ENCODE measurements at regions of chr2 and their contacts with region 1.

Region 1: GRCh38 chr2:201363857-201364560 is 6.9 kb upstream of the FLACC1 start:
- DNase-seq: peak; percentile 71
- ATAC-seq: peak; percentile 97
- H3K4me3 ChIP-seq: no peak overlapping the region
- H3K27ac ChIP-seq: no peak overlapping the region
- H3K4me1 ChIP-seq: peaks cover 2% of the 10 kb centered on the region; the same call in 1 of the 2 replicates
- H3K27me3 ChIP-seq: no peaks in the 10 kb centered on the region
- CTCF ChIP-seq: peak; percentile 86
- POLR2A ChIP-seq: no peak
- RAD21 ChIP-seq: peak; percentile 81

Region 2: GRCh38 chr2:201248288-201248844 is 115.6 kb before region 1 on chr2:
- CTCF ChIA-PET with region 1: interaction called, 3 read pairs
- POLR2A ChIA-PET with region 1: no interaction called
- dilution Hi-C with region 1: no loop called
- in situ Hi-C with region 1: loop called (anchors 5 kb)
- intact Hi-C with region 1: no loop called
- DNase-seq: no peak
- ATAC-seq: no peak
- H3K4me3 ChIP-seq: no peak overlapping the region
- H3K27ac ChIP-seq: no peak overlapping the region
- H3K4me1 ChIP-seq: peaks cover 2% of the 10 kb centered on the region; the same call in 1 of the 2 replicates
- H3K27me3 ChIP-seq: no peaks in the 10 kb centered on the region
- CTCF ChIP-seq: no peak
- POLR2A ChIP-seq: no peak
- RAD21 ChIP-seq: no peak

Region 3: DNA sequence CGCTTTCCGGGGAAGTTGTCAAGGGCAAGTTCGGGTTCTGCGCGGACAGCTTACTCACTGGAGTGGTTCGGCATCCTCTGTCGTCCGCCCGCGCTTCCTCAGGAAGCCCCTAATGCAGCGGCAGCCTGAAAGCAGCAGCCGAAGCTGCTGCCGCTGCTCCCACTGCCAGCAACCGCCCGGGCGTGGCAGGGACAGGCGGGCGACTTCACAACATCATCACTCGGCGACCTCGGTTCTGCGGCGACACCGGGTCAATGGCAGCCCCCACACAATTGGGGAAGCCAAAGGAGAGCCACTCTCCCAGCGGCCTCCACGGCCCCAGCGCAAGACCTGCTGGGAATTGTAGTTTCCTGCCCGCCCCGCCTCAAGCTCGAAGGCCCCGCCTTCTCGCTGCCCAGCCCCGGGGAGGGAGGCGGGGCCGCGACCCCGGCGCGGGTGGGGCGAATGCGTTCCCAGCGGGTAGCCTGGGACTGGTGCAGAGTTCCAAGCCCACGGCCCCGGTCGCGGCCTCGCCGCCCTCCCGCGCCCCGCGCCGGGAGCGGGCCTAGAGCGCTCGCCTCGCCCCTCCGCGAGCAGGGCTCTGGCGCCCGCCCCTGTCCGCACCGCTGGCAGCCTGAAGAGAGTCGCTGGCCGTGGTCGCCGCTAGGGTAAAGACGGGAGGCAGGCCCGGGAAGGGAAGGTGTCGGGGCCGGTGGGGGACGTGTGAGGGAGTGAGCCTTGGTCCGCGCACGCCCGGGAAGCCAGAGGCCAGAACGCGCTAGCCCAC is 87.5 kb after region 1 on chr2 and contains the starts of genes STRADB and TRAK2:
- CTCF ChIA-PET with region 1: no interaction called
- POLR2A ChIA-PET with region 1: no interaction called
- dilution Hi-C with region 1: no loop called
- in situ Hi-C with region 1: no loop called
- intact Hi-C with region 1: no loop called
- DNase-seq: peak; percentile 92
- ATAC-seq: peak; percentile 97
- H3K4me3 ChIP-seq: peak within 1 kb of the TSS; percentile 82
- H3K27ac ChIP-seq: peak within 1 kb of the TSS; percentile 80
- H3K4me1 ChIP-seq: peaks cover 2% of the 10 kb centered on the region; the same call in 1 of the 2 replicates
- H3K27me3 ChIP-seq: no peaks in the 10 kb centered on the region
- CTCF ChIP-seq: peak; percentile 30; the same call in 1 of the 2 replicates
- POLR2A ChIP-seq: peak; percentile 70; the same call in 1 of the 2 replicates
- RAD21 ChIP-seq: no peak
- total RNA-seq, gene STRADB: 31.5 and 32.5 TPM in 2 replicates
- total RNA-seq, gene TRAK2: 48.9 and 65.4 TPM in 2 replicates

Region 4: DNA sequence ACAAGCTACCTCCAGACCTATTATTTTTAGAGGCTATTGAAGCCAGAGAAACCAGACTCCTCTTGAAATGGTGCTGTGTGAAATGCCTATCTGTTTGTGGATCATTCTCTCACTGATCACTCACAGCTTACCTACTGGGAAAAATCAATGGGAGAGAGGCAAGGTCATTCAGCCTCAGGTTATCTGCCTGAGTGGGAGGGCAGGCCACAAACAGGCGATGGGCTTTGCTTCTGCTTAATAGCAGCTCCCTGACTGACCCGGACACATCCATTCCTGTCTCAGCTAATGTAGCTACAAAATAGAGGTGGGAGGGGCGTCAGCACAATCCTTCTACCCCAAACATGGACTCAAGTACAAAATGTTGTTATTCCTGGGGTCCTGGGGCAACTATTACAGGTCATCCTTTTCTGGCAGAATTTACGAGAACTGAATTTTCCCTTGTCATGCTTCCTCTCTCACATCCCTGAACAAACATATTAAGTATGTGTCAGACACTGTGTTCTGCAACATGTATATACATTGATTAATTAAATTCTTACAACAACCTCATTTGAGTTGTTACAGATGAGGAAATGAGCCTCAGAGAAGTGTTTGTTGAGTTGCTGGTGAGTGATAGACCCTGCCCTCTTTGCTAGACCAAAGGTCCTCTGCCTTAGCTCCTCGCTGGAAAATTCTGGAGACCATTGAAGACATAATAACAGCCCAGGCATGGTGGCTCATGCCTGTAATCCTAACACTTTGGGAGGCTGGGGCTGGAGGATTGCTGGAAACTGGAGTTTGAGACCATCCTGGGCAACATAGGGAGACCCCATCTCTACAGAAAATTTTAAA is 502.8 kb after region 1 on chr2:
- CTCF ChIA-PET with region 1: no interaction called
- POLR2A ChIA-PET with region 1: no interaction called
- dilution Hi-C with region 1: no loop called
- in situ Hi-C with region 1: no loop called
- intact Hi-C with region 1: no loop called
- DNase-seq: no peak
- ATAC-seq: peak; percentile 50
- H3K4me3 ChIP-seq: no peak overlapping the region
- H3K27ac ChIP-seq: peak overlapping the region; percentile 52; the same call in 1 of the 2 replicates
- H3K4me1 ChIP-seq: peaks cover 8% of the 10 kb centered on the region
- H3K27me3 ChIP-seq: no peaks in the 10 kb centered on the region
- CTCF ChIP-seq: no peak
- POLR2A ChIP-seq: no peak
- RAD21 ChIP-seq: no peak